ENCODE measurements at regions of chr16 and their contacts with region 1.

Region 1: DNA sequence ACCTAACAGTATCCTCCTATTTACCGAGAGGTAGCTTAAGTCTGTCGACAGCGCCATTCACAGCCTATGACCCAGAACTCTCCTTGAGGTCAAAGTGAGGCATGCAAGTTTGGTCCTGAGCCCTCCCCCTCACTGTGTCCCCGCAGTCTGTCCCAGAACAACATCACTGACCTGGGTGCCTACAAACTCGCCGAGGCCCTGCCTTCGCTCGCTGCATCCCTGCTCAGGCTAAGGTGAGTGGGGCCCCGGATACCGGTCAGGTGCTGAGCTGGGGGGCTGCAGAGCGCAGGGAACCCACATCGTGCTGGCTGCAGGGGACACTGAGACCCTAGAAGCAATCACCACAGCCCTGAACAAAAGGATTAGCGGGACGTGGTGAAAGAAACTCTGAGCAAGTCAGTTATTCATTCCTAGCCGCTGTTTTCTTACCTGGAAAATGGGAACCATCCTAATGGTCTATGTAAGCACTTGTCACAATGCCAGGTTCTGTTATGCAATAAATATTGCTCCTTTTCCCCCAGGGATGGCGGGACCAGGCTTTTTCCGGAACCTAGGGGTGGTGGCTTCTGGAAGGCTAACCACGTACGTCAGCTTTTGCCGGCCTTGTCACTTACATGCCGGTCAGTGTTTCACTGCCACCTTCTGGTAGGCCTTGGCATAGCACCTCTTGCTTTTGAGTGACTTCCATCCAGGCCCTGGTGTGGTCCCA is 23.8 kb downstream of the DEXI start:
- DNase-seq: peak; percentile 74
- H3K4me3 Mint-ChIP-seq: no peak overlapping the region
- H3K27ac Mint-ChIP-seq: no peak overlapping the region
- H3K4me1 Mint-ChIP-seq: peaks cover 24% of the 10 kb centered on the region
- H3K27me3 Mint-ChIP-seq: no peaks in the 10 kb centered on the region

Region 2: DNA sequence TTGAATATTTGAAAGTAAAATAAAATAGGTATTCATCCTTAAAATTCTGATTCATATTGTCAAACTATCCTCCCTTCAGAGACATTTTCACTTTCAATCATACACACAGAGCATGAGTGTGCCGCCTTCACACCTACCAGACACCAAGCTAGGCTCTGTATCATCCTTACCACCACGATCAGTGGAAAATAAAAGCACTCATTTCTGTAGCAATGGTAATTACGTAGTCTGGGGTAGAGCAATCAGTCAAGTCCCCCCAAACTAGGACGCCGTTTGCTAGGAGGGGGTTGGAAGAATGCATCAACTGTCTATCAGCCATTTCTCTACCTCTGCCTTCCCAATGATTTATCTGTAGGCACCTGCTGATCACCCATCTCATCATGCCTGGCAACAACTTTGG is 651.6 kb before region 1 on chr16:
- intact Hi-C with region 1: loop called (anchors 10 kb)
- DNase-seq: no peak
- H3K4me3 Mint-ChIP-seq: no peak overlapping the region
- H3K27ac Mint-ChIP-seq: no peak overlapping the region
- H3K4me1 Mint-ChIP-seq: peaks cover 7% of the 10 kb centered on the region
- H3K27me3 Mint-ChIP-seq: no peaks in the 10 kb centered on the region

Region 3: DNA sequence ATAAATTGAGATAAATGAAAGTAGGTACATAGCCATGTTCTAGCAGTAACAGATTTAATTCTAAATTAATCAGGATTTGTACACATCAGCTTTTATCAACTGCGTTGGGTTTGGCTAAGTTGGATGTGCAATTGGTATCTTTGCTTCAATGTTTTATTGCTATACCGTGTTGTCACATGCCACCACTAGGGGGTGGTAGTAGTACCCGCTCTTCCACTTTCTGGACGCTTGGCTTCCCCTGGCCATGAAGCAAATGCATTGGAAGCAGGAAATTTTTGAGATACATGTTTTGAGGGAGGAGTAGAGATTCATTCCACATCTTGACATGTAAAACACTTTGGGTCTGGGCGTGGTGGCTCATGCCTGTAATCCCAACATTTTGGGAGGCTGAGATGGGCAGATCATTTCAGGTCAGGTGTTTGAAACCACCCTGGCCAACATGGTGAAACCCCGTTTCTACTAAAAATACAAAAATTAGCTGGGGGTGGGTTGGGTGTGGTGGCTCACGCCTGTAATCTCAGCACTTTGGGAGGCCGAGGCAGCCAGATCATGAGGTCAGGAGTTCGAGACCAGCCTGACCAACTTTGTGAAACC is 396.7 kb before region 1 on chr16:
- intact Hi-C with region 1: loop called (anchors 1 kb)
- DNase-seq: peak; percentile 10
- H3K4me3 Mint-ChIP-seq: no peak overlapping the region
- H3K27ac Mint-ChIP-seq: no peak overlapping the region
- H3K4me1 Mint-ChIP-seq: peaks cover 2% of the 10 kb centered on the region
- H3K27me3 Mint-ChIP-seq: no peaks in the 10 kb centered on the region

Region 4: GRCh38 chr16:10743610-10744393 is 174.6 kb before region 1 on chr16 and contains the start of gene NUBP1:
- intact Hi-C with region 1: loop called (anchors 2 kb)
- DNase-seq: peak; percentile 96
- H3K4me3 Mint-ChIP-seq: peak within 1 kb of the TSS; percentile 88
- H3K27ac Mint-ChIP-seq: peak within 1 kb of the TSS; percentile 96
- H3K4me1 Mint-ChIP-seq: peaks cover 44% of the 10 kb centered on the region
- H3K27me3 Mint-ChIP-seq: no peaks in the 10 kb centered on the region
- total RNA-seq, gene NUBP1: 33.9 and 35.9 TPM in 2 replicates

Region 5: GRCh38 chr16:10871149-10871991 is 47.1 kb before region 1 on chr16:
- intact Hi-C with region 1: loop called (anchors 2 kb)
- DNase-seq: peak; percentile 61
- H3K4me3 Mint-ChIP-seq: no peak overlapping the region
- H3K27ac Mint-ChIP-seq: peak overlapping the region; percentile 60
- H3K4me1 Mint-ChIP-seq: peaks cover 67% of the 10 kb centered on the region
- H3K27me3 Mint-ChIP-seq: peaks cover 6% of the 10 kb centered on the region

Region 6: GRCh38 chr16:10961231-10961630 is 42.8 kb after region 1 on chr16:
- intact Hi-C with region 1: no loop called
- DNase-seq: no peak
- H3K4me3 Mint-ChIP-seq: no peak overlapping the region
- H3K27ac Mint-ChIP-seq: peak overlapping the region; percentile 74
- H3K4me1 Mint-ChIP-seq: peaks cover 74% of the 10 kb centered on the region
- H3K27me3 Mint-ChIP-seq: no peaks in the 10 kb centered on the region

Measured in activated T-helper 2 cell treated with anti-CD3 and anti-CD28 coated beads, Interferon-gamma antibody, Interleukin-2, Interleukin-4, amounts not matched to agents 10 μg/mL and 5 μg/mL and 100 μg/mL, durations not matched to agents 14 hours and 24 hours and 36 hours (primary cell).